Activated CD4-positive, alpha-beta memory T cell treated with anti-CD3 and anti-CD28 coated beads for 36 hours (primary cell): ENCODE measurements at regions of chr14 and their contacts with region 1.

Region 1: DNA sequence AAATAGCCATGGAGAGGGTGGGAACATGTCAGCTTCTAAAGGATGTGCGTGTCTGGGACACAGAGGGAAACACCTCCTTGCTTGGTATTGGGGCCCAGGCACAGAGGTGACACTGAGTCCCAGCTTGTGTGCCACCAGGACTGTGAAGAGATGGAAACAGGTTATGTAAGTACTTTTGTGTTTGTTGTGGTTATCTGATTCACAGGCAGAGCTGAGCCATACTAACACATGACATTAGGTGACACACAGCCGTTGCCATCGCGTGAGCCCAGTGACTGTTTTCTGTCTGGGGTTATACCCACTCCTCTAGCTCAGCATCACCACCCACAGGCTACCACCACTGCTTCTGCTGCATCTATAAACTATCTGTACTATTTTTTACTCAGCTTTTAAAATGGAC is 12.1 kb upstream of the FLVCR2 start:
- DNase-seq: peak; percentile 94
- H3K4me3 Mint-ChIP-seq: peak overlapping the region; percentile 72
- H3K27ac Mint-ChIP-seq: peak overlapping the region; percentile 93
- H3K4me1 Mint-ChIP-seq: peaks cover 90% of the 10 kb centered on the region
- H3K27me3 Mint-ChIP-seq: no peaks in the 10 kb centered on the region

Region 2: GRCh38 chr14:75176142-75176820 is 390.0 kb before region 1 on chr14 and contains the start of gene TMED10:
- CTCF ChIA-PET with region 1: no interaction called
- POLR2A ChIA-PET with region 1: no interaction called
- intact Hi-C with region 1: loop called (anchors 2 kb)
- DNase-seq: peak; percentile 94
- H3K4me3 Mint-ChIP-seq: peak within 1 kb of the TSS; percentile 86
- H3K27ac Mint-ChIP-seq: peak within 1 kb of the TSS; percentile 98
- H3K4me1 Mint-ChIP-seq: peaks cover 42% of the 10 kb centered on the region
- H3K27me3 Mint-ChIP-seq: no peaks in the 10 kb centered on the region
- total RNA-seq, gene TMED10: 189 to 201 TPM

Region 3: GRCh38 chr14:75487155-75487671 is 79.1 kb before region 1 on chr14:
- CTCF ChIA-PET with region 1: interaction called, 19 read pairs
- POLR2A ChIA-PET with region 1: interaction called, 7 read pairs
- intact Hi-C with region 1: loop called (anchors 1 kb)
- DNase-seq: peak; percentile 25
- H3K4me3 Mint-ChIP-seq: no peak overlapping the region
- H3K27ac Mint-ChIP-seq: peak overlapping the region; percentile 62
- H3K4me1 Mint-ChIP-seq: peaks cover 22% of the 10 kb centered on the region
- H3K27me3 Mint-ChIP-seq: peaks cover 2% of the 10 kb centered on the region

Region 4: DNA sequence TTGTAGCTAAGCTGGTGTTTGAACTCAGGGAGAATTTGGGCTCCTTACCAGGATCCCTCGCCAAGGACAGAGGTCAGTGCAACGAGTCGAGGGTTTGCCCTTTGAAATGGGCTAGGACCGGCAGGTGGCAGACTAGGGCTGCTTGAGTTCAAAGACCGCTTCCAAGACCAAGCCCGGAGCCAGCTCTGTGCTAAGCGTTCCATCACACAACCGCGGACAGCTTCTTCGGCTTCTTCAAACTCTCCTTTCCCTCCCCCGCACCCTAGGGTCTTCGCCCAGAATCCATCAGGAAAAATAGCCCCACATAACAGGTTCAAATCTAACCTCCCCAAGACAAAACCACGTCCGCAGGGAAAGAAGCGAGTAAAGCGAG is 11.4 kb after region 1 on chr14:
- CTCF ChIA-PET with region 1: interaction called, 70 read pairs
- POLR2A ChIA-PET with region 1: interaction called, 11 read pairs
- intact Hi-C with region 1: loop called (anchors 1 kb)
- DNase-seq: peak; percentile 87
- H3K4me3 Mint-ChIP-seq: peak overlapping the region; percentile 86
- H3K27ac Mint-ChIP-seq: peak overlapping the region; percentile 88
- H3K4me1 Mint-ChIP-seq: peaks cover 13% of the 10 kb centered on the region
- H3K27me3 Mint-ChIP-seq: no peaks in the 10 kb centered on the region

Region 5: DNA sequence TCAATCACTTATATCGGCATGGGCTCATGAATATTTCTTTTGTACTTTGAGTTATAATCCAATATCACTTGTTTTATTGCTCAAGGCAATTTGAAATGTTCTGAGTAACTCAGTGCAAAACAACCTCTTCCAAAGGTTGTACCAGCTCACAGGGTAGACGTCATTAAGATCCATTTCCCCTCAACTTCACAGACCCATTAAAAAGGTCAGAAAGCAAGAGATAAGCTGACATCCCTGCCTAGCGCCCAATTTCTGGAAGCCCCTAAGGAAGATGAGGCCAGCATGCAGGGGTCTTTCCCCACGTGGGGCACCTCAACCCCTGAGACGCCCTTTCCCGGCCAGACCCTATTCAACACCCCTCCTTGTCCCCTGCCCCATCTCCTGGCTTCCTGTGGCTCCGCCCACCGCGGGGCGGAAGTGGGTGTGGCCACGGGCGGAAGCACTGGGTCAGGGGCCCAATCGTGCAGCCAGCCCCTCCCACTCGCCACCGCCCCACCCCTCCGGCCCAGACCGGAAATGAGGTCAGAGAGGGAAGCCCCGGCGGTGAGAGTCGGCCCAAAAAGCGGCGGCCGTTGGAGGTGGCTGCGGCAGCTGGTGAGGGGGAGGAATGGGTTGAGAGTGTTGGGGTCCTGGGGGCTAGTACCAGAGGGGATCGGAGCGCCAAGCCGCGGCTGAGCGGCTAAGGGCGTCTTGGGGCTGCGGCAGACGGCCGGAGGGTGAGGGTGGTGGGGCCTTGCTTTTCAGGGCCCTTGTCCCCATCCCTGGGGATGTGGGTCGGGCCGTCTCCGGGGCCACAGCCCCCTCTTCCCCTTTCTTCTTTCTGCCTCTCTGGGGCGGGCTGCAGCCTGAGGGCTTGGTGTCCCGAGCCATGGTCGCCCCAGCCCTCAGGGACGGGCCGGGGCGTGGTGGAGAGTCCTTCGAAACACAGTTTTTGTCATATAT is 585.3 kb after region 1 on chr14 and contains the start of gene GPATCH2L:
- CTCF ChIA-PET with region 1: no interaction called
- POLR2A ChIA-PET with region 1: no interaction called
- intact Hi-C with region 1: loop called (anchors 5 kb)
- DNase-seq: peak; percentile 99
- H3K4me3 Mint-ChIP-seq: peak within 1 kb of the TSS; percentile 93
- H3K27ac Mint-ChIP-seq: peak within 1 kb of the TSS; percentile 96
- H3K4me1 Mint-ChIP-seq: peaks cover 49% of the 10 kb centered on the region
- H3K27me3 Mint-ChIP-seq: no peaks in the 10 kb centered on the region
- total RNA-seq, gene GPATCH2L: 50.1 to 52.1 TPM